ENCODE measurements at regions of chr11 and their contacts with region 1.

Region 1: DNA sequence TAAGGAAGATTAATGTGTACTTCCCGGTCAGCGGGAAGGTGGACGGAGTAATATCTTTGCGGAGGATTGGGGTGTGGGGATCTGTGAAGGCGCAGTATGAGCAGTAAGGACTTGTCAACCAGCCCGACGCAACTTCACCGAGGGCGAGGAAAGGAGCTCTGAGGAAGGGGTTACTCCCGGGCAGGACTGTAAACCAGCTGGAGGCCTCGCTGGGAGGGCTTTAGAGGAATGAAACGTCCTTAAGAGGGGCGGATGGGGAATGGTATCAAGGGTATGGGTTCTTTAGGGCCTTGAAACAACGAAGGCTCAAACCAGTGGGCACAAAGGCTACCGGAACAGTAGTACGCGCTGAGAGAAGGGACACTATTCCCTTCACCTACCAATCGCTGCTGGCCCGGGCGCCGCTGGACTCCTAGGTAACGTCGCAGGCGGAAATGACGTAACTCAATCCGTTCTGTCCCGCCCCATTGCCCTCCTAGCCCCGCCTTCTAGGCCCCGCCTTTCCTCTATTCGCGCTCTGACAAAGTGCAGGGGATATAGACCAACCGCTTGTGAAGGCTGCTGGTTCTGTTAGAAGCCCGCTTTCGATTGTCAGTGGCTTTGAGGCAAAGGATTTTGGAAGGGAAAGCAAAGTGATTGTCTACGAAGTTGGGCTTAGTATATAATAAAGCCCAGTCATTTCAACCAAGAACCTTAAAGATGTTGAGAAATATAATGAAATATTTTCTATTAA is at the start of gene C11orf65:
- DNase-seq: peak; percentile 99
- H3K4me3 ChIP-seq: peak within 1 kb of the TSS; percentile 68
- H3K4me3 Mint-ChIP-seq: peak within 1 kb of the TSS; percentile 97
- H3K27ac Mint-ChIP-seq: peak within 1 kb of the TSS; percentile 100
- H3K4me1 ChIP-seq: peaks cover 9% of the 10 kb centered on the region
- H3K4me1 Mint-ChIP-seq: peaks cover 17% of the 10 kb centered on the region
- H3K27me3 ChIP-seq: no peaks in the 10 kb centered on the region
- H3K27me3 Mint-ChIP-seq: no peaks in the 10 kb centered on the region
- CTCF ChIP-seq: no peak
- total RNA-seq, gene C11orf65: 0.86 and 1.0 TPM in 2 replicates

Region 2: DNA sequence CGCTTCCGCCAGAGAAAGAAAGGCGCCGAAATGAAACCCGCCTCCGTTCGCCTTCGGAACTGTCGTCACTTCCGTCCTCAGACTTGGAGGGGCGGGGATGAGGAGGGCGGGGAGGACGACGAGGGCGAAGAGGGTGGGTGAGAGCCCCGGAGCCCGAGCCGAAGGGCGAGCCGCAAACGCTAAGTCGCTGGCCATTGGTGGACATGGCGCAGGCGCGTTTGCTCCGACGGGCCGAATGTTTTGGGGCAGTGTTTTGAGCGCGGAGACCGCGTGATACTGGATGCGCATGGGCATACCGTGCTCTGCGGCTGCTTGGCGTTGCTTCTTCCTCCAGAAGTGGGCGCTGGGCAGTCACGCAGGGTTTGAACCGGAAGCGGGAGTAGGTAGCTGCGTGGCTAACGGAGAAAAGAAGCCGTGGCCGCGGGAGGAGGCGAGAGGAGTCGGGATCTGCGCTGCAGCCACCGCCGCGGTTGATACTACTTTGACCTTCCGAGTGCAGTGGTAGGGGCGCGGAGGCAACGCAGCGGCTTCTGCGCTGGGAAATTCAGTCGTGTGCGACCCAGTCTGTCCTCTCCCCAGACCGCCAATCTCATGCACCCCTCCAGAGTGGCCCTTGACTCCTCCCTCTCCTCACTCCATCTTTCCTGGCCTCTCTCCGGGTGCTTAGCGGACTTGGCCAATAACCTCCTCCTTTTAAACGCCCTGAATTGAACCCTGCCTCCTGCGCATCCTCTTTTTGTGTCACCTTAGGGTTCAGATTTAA is 244.4 kb before region 1 on chr11 and contains the start of gene ATM:
- CTCF ChIA-PET with region 1: interaction called, 6 read pairs
- POLR2A ChIA-PET with region 1: interaction called, 3 read pairs
- intact Hi-C with region 1: loop called (anchors 1 kb)
- DNase-seq: peak; percentile 100
- H3K4me3 ChIP-seq: peak within 1 kb of the TSS; percentile 62
- H3K4me3 Mint-ChIP-seq: no peak within 1 kb of the TSS
- H3K27ac Mint-ChIP-seq: no peak within 1 kb of the TSS
- H3K4me1 ChIP-seq: peaks cover 19% of the 10 kb centered on the region
- H3K4me1 Mint-ChIP-seq: peaks cover 21% of the 10 kb centered on the region
- H3K27me3 ChIP-seq: no peaks in the 10 kb centered on the region
- H3K27me3 Mint-ChIP-seq: no peaks in the 10 kb centered on the region
- CTCF ChIP-seq: peak; percentile 86 to 98
- total RNA-seq, gene ATM: 77.1 and 77.9 TPM in 2 replicates

Region 3: GRCh38 chr11:108414958-108415357 is 52.3 kb before region 1 on chr11:
- CTCF ChIA-PET with region 1: no interaction called
- POLR2A ChIA-PET with region 1: no interaction called
- intact Hi-C with region 1: loop called (anchors 2 kb)
- DNase-seq: no peak
- H3K4me3 ChIP-seq: no peak overlapping the region
- H3K4me3 Mint-ChIP-seq: no peak overlapping the region
- H3K27ac Mint-ChIP-seq: no peak overlapping the region
- H3K4me1 ChIP-seq: no peaks in the 10 kb centered on the region
- H3K4me1 Mint-ChIP-seq: no peaks in the 10 kb centered on the region
- H3K27me3 ChIP-seq: no peaks in the 10 kb centered on the region
- H3K27me3 Mint-ChIP-seq: peaks cover 3% of the 10 kb centered on the region
- CTCF ChIP-seq: no peak

Region 4: DNA sequence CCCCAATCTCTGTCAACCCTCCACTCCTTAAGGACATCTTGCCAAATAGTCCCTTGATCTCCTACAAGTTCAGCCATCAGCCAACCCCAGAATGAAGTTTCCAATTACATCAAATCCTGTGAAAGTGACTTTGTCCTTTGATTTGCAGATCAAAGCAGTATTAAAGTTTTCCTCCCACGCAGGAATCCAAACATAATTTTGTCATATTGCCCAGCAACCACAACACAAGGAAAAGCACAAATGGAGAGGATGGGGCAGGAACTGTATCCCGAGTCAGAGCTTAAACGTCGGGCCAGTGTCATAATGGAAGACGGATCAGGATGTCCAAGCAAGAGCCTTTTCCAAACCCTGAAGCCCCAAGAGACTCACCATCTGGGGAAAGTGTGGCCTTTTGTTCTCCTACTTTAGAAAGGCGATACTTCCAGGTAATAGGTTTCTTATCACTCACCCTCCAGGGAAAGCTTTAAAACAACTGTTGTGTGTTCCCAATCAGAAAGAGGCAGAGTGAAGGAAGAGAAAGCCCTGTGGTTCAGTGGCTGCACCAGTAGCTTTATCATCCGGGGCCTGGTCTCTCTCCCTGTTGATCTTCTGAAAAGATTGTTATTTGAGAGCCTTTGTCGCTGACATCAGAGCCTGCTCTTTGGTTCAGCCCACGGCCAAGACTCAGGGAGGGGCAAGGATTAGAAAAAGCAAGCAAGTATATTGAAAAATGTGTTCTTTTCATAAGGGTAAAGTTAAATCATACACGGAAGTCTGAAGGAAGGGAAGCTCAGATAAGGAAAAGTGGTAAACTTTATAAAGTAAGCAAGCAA is 84.6 kb after region 1 on chr11:
- CTCF ChIA-PET with region 1: no interaction called
- POLR2A ChIA-PET with region 1: no interaction called
- intact Hi-C with region 1: loop called (anchors 1 kb)
- DNase-seq: peak in 1 of 2 experiments; percentile 39
- H3K4me3 ChIP-seq: no peak overlapping the region
- H3K4me3 Mint-ChIP-seq: peak overlapping the region; percentile 38
- H3K27ac Mint-ChIP-seq: peak overlapping the region; percentile 40
- H3K4me1 ChIP-seq: peaks cover 51% of the 10 kb centered on the region
- H3K4me1 Mint-ChIP-seq: peaks cover 35% of the 10 kb centered on the region
- H3K27me3 ChIP-seq: no peaks in the 10 kb centered on the region
- H3K27me3 Mint-ChIP-seq: no peaks in the 10 kb centered on the region
- CTCF ChIP-seq: no peak